PC-9 (cell line): ENCODE measurements at regions of chr12 and their contacts with region 1.

Region 1: GRCh38 chr12:67315661-67316060 is 46.5 kb downstream of the CAND1 start:
- DNase-seq: no peak
- H3K4me3 ChIP-seq: no peak overlapping the region
- H3K27ac ChIP-seq: no peak overlapping the region; the same call in 1 of the 2 replicates
- H3K4me1 ChIP-seq: no peaks in the 10 kb centered on the region
- H3K27me3 ChIP-seq: no peaks in the 10 kb centered on the region
- CTCF ChIP-seq: no peak

Region 2: GRCh38 chr12:67299926-67300325 is 15.7 kb before region 1 on chr12:
- CTCF ChIA-PET with region 1: no interaction called
- POLR2A ChIA-PET with region 1: no interaction called
- intact Hi-C with region 1: loop called (anchors 2 kb)
- DNase-seq: no peak
- H3K4me3 ChIP-seq: no peak overlapping the region
- H3K27ac ChIP-seq: no peak overlapping the region
- H3K4me1 ChIP-seq: no peaks in the 10 kb centered on the region
- H3K27me3 ChIP-seq: no peaks in the 10 kb centered on the region
- CTCF ChIP-seq: no peak